Activated B cell treated with CpG ODN at 0.5 μM for 24 hours (primary cell): ENCODE measurements at regions of chr4 and their contacts with region 1.

Region 1: GRCh38 chr4:90293320-90293719 is 166.1 kb downstream of the CCSER1 start:
- DNase-seq: no peak
- ATAC-seq: no peak
- H3K4me3 Mint-ChIP-seq: no peak overlapping the region
- H3K27ac Mint-ChIP-seq: no peak overlapping the region
- H3K4me1 Mint-ChIP-seq: no peaks in the 10 kb centered on the region
- H3K27me3 Mint-ChIP-seq: no peaks in the 10 kb centered on the region
- CTCF ChIP-seq: peak; percentile 79

Region 2: GRCh38 chr4:89226665-89227574 is 1066.4 kb before region 1 on chr4:
- CTCF ChIA-PET with region 1: interaction called, 3 read pairs
- POLR2A ChIA-PET with region 1: no interaction called
- intact Hi-C with region 1: loop called (anchors 5 kb)
- DNase-seq: peak; percentile 25
- ATAC-seq: peak; percentile 85
- H3K4me3 Mint-ChIP-seq: no peak overlapping the region
- H3K27ac Mint-ChIP-seq: no peak overlapping the region
- H3K4me1 Mint-ChIP-seq: peaks cover 4% of the 10 kb centered on the region
- H3K27me3 Mint-ChIP-seq: no peaks in the 10 kb centered on the region
- CTCF ChIP-seq: peak; percentile 20

Region 3: GRCh38 chr4:89712141-89712540 is 581.2 kb before region 1 on chr4:
- CTCF ChIA-PET with region 1: no interaction called
- POLR2A ChIA-PET with region 1: no interaction called
- intact Hi-C with region 1: no loop called
- DNase-seq: no peak
- ATAC-seq: no peak
- H3K4me3 Mint-ChIP-seq: no peak overlapping the region
- H3K27ac Mint-ChIP-seq: no peak overlapping the region
- H3K4me1 Mint-ChIP-seq: no peaks in the 10 kb centered on the region
- H3K27me3 Mint-ChIP-seq: no peaks in the 10 kb centered on the region
- CTCF ChIP-seq: no peak

Region 4: GRCh38 chr4:89904524-89904923 is 388.8 kb before region 1 on chr4:
- CTCF ChIA-PET with region 1: no interaction called
- POLR2A ChIA-PET with region 1: no interaction called
- intact Hi-C with region 1: loop called (anchors 5 kb)
- DNase-seq: no peak
- ATAC-seq: no peak
- H3K4me3 Mint-ChIP-seq: no peak overlapping the region
- H3K27ac Mint-ChIP-seq: no peak overlapping the region
- H3K4me1 Mint-ChIP-seq: no peaks in the 10 kb centered on the region
- H3K27me3 Mint-ChIP-seq: no peaks in the 10 kb centered on the region
- CTCF ChIP-seq: no peak

Region 5: GRCh38 chr4:90025248-90025647 is 268.1 kb before region 1 on chr4:
- CTCF ChIA-PET with region 1: interaction called, 14 read pairs
- POLR2A ChIA-PET with region 1: no interaction called
- intact Hi-C with region 1: loop called (anchors 1 kb)
- DNase-seq: no peak
- ATAC-seq: no peak
- H3K4me3 Mint-ChIP-seq: peak overlapping the region; percentile 15
- H3K27ac Mint-ChIP-seq: no peak overlapping the region
- H3K4me1 Mint-ChIP-seq: peaks cover 37% of the 10 kb centered on the region
- H3K27me3 Mint-ChIP-seq: no peaks in the 10 kb centered on the region
- CTCF ChIP-seq: no peak

Region 6: GRCh38 chr4:90799894-90800293 is 506.6 kb after region 1 on chr4:
- CTCF ChIA-PET with region 1: no interaction called
- POLR2A ChIA-PET with region 1: no interaction called
- intact Hi-C with region 1: no loop called
- DNase-seq: no peak
- ATAC-seq: no peak
- H3K4me3 Mint-ChIP-seq: no peak overlapping the region
- H3K27ac Mint-ChIP-seq: no peak overlapping the region
- H3K4me1 Mint-ChIP-seq: no peaks in the 10 kb centered on the region
- H3K27me3 Mint-ChIP-seq: no peaks in the 10 kb centered on the region
- CTCF ChIP-seq: no peak